Natural killer cell (primary cell): ENCODE measurements at regions of chr12 and their contacts with region 1.

Region 1: DNA sequence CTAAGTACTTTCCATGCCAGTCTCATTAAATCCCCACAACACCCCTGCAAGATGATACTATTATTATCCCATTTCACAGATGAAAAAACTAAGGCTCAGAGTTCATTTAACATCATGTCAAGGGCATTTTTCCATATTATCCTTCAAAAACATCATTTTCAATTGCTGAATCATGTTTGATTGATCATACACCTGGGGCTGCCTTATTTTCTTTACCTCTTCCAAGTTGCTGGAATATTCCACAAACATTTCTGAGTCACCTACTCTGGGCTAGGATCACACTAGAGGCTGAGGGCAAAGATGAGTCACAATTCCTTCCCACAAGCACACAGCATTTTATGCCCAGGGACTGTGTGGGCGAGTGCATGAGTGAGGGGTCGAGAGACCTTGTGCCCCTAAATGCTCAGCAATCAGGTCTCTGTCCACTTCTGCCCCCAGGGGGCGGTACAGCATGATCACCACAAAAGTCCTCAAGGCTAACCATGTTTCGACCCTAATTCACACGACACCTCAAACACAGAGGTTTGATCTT is 14.1 kb upstream of the TMEM119 start:
- DNase-seq: peak; percentile 66 to 80
- ATAC-seq: peak; percentile 67 to 72 (median 68)
- H3K4me3 ChIP-seq: no peak overlapping the region
- H3K4me3 Mint-ChIP-seq: no peak overlapping the region
- H3K27ac ChIP-seq: no peak overlapping the region
- H3K27ac Mint-ChIP-seq: peak overlapping the region in 1 of 2 donors; percentile 70
- H3K4me1 ChIP-seq: peaks cover 14% of the 10 kb centered on the region
- H3K4me1 Mint-ChIP-seq: peaks cover 23 to 24% of the 10 kb centered on the region in 2 donors
- H3K27me3 ChIP-seq: no peaks in the 10 kb centered on the region
- H3K27me3 Mint-ChIP-seq: peaks cover 0 to 6% of the 10 kb centered on the region in 2 donors
- CTCF ChIP-seq: peak; percentile 69

Region 2: GRCh38 chr12:108562348-108563135 is 49.4 kb before region 1 on chr12 and contains the start of gene ISCU:
- intact Hi-C with region 1: no loop called
- DNase-seq: peak; percentile 99 to 100
- ATAC-seq: peak; percentile 76 to 92 (median 77)
- H3K4me3 ChIP-seq: peak within 1 kb of the TSS; percentile 97
- H3K4me3 Mint-ChIP-seq: peak within 1 kb of the TSS; percentile 100
- H3K27ac ChIP-seq: peak within 1 kb of the TSS; percentile 96
- H3K27ac Mint-ChIP-seq: peak within 1 kb of the TSS; percentile 99 to 100
- H3K4me1 ChIP-seq: peaks cover 38% of the 10 kb centered on the region
- H3K4me1 Mint-ChIP-seq: peaks cover 39 to 42% of the 10 kb centered on the region in 2 donors
- H3K27me3 ChIP-seq: no peaks in the 10 kb centered on the region
- H3K27me3 Mint-ChIP-seq: no peaks in the 10 kb centered on the region
- CTCF ChIP-seq: no peak
- total RNA-seq, gene ISCU: 86.9 to 103 (median 97.4) TPM

Region 3: DNA sequence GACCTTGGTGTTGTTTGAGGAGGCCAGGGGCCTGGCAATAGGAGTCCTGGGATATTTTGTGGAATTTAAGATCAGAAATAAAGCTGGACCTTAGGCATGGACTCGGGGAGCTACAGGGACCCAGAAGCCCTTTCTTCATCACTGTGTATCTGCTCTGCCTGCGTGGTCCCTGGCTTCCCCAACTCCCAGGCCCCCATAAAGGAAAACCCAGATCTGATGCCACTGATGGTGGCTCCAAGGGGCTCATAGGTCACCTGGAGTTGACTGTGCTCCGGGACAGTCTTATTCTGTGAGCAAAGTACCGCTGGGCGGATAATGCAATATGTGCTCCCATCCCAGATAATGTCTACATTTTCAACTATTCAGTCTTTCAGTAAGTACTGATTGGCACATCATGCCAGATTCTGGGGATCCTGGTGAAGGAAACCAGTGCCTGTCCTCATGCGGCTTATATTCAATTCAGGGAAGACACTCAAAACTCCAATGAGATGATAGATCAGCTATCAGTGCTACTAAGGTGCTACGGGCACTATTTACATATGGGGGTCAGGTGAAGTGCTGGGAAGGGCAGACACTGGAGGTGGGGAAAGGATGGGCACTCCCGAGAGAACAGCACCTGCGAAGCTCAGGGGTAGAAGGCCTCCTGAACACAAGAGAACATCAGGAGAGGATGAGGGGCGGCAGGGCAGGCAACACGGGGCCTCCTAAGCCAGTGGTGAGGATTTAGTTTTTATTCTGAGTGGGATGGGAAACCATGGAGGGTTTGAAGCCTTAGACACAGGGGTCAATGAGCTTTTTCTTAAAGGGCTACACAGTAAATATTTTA is 27.3 kb after region 1 on chr12:
- intact Hi-C with region 1: no loop called
- DNase-seq: no peak
- ATAC-seq: no peak
- H3K4me3 ChIP-seq: no peak overlapping the region
- H3K4me3 Mint-ChIP-seq: no peak overlapping the region
- H3K27ac ChIP-seq: no peak overlapping the region
- H3K27ac Mint-ChIP-seq: peak overlapping the region in 1 of 2 donors; percentile 49
- H3K4me1 ChIP-seq: peaks cover 53% of the 10 kb centered on the region
- H3K4me1 Mint-ChIP-seq: peaks cover 16 to 38% of the 10 kb centered on the region in 2 donors
- H3K27me3 ChIP-seq: no peaks in the 10 kb centered on the region
- H3K27me3 Mint-ChIP-seq: no peaks in the 10 kb centered on the region
- CTCF ChIP-seq: no peak

Region 4: DNA sequence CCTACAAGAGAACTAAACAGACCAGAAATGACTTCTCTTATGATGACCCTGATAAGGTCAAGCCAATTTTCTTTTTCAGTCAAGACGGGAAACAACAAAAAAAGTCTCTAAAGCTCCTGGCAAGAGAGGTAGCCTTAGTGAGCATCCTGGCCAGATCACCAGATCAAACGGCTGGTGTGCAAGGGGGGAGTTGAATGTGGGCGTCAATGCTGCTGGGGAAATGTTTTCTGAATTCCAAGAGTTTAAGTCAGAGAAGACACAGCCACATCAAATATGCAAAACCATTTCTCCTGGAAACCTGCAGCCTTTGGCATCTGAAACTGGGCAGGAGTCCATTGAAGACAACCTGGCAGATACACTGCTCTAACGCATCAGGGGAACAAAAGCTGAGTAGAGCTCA is 37.7 kb after region 1 on chr12:
- intact Hi-C with region 1: loop called (anchors 5 kb)
- DNase-seq: no peak
- ATAC-seq: no peak
- H3K4me3 ChIP-seq: no peak overlapping the region
- H3K4me3 Mint-ChIP-seq: no peak overlapping the region
- H3K27ac ChIP-seq: no peak overlapping the region
- H3K27ac Mint-ChIP-seq: no peak overlapping the region
- H3K4me1 ChIP-seq: peaks cover 9% of the 10 kb centered on the region
- H3K4me1 Mint-ChIP-seq: peaks cover 9 to 11% of the 10 kb centered on the region in 2 donors
- H3K27me3 ChIP-seq: no peaks in the 10 kb centered on the region
- H3K27me3 Mint-ChIP-seq: no peaks in the 10 kb centered on the region
- CTCF ChIP-seq: no peak

Region 5: GRCh38 chr12:108664338-108665258 is 52.6 kb after region 1 on chr12:
- intact Hi-C with region 1: loop called (anchors 1 kb)
- DNase-seq: peak; percentile 65 to 90
- ATAC-seq: peak; percentile 99 to 100 (median 100)
- H3K4me3 ChIP-seq: no peak overlapping the region
- H3K4me3 Mint-ChIP-seq: no peak overlapping the region
- H3K27ac ChIP-seq: peak overlapping the region; percentile 14
- H3K27ac Mint-ChIP-seq: peak overlapping the region; percentile 63 to 88
- H3K4me1 ChIP-seq: peaks cover 6% of the 10 kb centered on the region
- H3K4me1 Mint-ChIP-seq: peaks cover 5 to 12% of the 10 kb centered on the region in 2 donors
- H3K27me3 ChIP-seq: no peaks in the 10 kb centered on the region
- H3K27me3 Mint-ChIP-seq: no peaks in the 10 kb centered on the region
- CTCF ChIP-seq: peak; percentile 84

Region 6: GRCh38 chr12:108722992-108723766 is 111.2 kb after region 1 on chr12:
- intact Hi-C with region 1: no loop called
- DNase-seq: no peak
- ATAC-seq: no peak
- H3K4me3 ChIP-seq: no peak overlapping the region
- H3K4me3 Mint-ChIP-seq: no peak overlapping the region
- H3K27ac ChIP-seq: no peak overlapping the region
- H3K27ac Mint-ChIP-seq: peak overlapping the region in 1 of 2 donors; percentile 47
- H3K4me1 ChIP-seq: peaks cover 10% of the 10 kb centered on the region
- H3K4me1 Mint-ChIP-seq: peaks cover 28 to 44% of the 10 kb centered on the region in 2 donors
- H3K27me3 ChIP-seq: no peaks in the 10 kb centered on the region
- H3K27me3 Mint-ChIP-seq: no peaks in the 10 kb centered on the region
- CTCF ChIP-seq: no peak